ENCODE measurements at regions of chr5 and their contacts with region 1.

Region 1: GRCh38 chr5:139690064-139690802 is 42.1 kb downstream of the CXXC5 start:
- DNase-seq: peak; percentile 62
- CTCF ChIP-seq: peak; percentile 85

Region 2: DNA sequence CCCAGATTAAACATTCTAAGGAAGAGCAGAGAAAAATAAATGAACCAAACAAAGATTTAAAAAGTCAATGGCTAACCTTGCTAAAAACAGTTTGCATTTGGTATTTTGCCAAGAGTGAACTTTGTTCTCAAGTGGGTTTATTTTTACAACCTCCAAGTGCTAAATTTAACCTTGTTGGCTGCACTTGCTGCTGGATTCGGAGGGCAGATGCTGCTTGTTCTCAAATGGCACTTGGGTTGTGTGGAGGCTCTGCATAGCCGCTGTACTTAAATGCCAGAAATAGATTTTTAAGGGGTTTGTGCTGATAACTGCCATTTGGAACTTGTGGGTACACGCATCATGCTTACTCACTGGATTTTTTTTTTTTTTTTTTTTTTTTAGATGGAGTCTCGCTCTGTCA is 273.0 kb before region 1 on chr5:
- CTCF ChIA-PET with region 1: interaction called, 11 read pairs
- POLR2A ChIA-PET with region 1: no interaction called
- DNase-seq: no peak
- CTCF ChIP-seq: no peak

Region 3: GRCh38 chr5:139651853-139652787 is 38.1 kb before region 1 on chr5:
- CTCF ChIA-PET with region 1: interaction called, 15 read pairs
- POLR2A ChIA-PET with region 1: no interaction called
- DNase-seq: peak; percentile 93
- CTCF ChIP-seq: no peak

Region 4: GRCh38 chr5:139660923-139661814 is 29.1 kb before region 1 on chr5:
- CTCF ChIA-PET with region 1: interaction called, 10 read pairs
- POLR2A ChIA-PET with region 1: interaction called, 5 read pairs
- DNase-seq: peak; percentile 60
- CTCF ChIP-seq: no peak

Region 5: GRCh38 chr5:139670369-139671095 is 19.7 kb before region 1 on chr5:
- CTCF ChIA-PET with region 1: interaction called, 40 read pairs
- POLR2A ChIA-PET with region 1: interaction called, 5 read pairs
- DNase-seq: peak; percentile 74
- CTCF ChIP-seq: peak; percentile 45

Region 6: DNA sequence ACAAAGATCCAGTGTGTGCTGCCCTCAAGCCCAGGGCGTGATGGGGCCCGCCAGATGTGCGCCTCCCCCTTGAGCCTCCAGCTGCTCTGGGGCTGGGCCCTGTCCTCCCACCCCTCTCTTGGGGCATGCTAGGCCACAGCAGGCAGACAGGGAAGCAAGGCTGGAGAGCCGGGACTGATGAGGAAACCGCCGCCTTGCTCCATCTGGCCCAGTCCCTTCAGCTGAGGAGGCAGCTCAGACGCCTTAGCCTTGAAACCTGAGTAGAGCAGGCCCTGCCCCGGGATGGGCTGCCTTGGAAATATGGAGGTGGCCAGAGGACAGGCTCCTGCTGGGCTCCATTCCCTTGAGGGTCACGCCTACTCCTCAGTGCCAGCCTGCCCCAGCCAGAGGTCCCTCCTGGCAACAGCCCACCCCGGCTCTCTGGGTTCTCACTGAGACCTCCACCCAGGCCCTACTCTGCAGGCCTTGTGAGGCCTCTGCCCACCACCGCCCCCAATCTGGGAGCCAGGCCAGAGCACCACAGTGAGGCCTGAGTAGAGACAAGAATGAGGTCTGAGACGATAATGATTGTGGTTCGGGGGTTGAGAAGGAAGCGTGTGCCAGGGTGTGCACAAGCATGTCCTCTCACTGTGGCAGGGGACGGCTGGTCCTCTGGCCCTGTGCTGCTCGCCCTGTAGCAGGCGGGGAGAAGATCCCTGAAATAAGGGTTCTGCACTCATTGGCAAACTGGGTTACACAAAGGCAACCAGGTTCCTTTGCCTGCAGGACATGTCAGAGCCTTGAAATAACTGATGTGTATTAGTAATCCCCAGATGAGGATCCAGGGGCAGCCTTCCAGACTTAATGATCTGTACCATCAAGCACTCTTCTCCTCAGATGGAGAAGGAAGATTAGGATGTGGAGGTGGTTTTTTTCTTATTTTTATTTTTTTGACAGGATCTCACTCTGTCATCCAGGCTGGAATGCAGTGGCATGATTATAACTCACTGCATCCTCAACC is 11.2 kb before region 1 on chr5:
- CTCF ChIA-PET with region 1: interaction called, 12 read pairs
- POLR2A ChIA-PET with region 1: interaction called, 5 read pairs
- DNase-seq: no peak
- CTCF ChIP-seq: no peak